Vagina (tissue), 2 donors: ENCODE measurements at regions of chr6 and their contacts with region 1.

Region 1: DNA sequence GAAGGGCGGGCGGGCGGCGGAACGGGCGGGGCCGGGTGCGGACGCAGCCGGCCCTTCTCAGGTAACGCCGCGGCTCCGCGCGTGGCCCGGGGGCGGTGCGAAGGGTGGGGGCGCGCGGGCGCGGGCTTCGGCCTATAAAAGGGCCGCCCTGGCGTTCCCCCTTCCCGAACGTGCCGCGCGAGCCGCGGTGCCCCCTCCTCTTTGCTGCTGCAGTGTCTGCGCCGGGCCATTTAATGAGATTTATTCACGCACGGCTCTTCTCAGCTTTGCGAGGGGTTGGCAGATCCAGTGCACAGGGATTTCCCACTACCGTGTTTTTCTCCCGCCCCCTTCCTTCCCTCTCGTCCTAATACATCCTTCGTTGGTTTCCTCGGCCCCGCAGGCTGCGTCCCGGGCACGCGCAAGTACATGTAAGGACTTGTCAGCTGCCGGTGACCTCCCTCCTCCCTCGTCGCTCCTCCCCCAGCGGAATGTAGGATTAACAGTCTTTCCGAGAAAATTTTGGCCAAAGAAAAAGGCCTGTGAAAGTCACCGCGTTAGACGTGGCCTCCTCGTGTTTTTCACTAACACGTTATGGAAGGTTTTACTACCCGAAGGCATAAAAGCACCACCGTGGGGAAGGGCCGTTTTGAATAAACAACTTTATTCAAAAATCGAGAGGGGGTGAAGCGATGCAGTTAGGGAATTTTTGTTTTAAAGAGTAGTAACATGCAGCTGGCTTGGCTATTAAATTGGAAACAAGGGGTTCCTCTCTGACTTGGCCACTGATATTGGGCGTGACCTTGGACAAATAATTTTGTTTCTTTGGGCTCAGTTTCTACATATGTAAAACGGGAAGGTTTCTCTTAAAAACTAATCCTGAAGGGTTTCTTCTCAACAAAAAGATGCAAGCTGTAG is 966 bp upstream of the REV3L start:
- DNase-seq: peak in 1 of 2 donors; percentile 99
- H3K4me3 ChIP-seq: peak overlapping the region; percentile 84 to 89
- H3K27ac ChIP-seq: peak overlapping the region; percentile 99
- H3K4me1 ChIP-seq: peaks cover 26% of the 10 kb centered on the region
- H3K27me3 ChIP-seq: no peaks in the 10 kb centered on the region
- CTCF ChIP-seq: peak in 1 of 3 experiments; percentile 17
- POLR2A ChIP-seq: peak in 1 of 2 donors; percentile 76

Region 2: DNA sequence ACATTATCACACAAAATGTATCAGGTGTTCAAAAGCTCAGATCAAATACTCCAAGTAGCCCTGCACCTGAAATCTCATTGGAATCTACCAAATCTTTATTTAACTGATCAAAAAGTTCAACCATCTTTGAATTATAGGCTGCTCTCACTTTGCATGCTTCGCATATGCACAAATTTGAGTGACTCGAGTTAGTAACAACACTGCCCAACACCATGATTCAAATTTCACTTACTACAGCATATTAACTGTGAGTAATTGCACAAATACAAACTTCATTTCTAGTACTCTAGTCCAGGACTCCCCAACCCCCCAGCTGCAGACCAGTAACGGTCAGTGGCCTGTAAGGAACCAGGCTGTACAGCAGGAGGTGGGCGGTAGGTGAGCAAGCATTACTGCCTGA is 1355.6 kb before region 1 on chr6:
- intact Hi-C with region 1: no loop called
- DNase-seq: no peak
- H3K4me3 ChIP-seq: no peak overlapping the region
- H3K27ac ChIP-seq: no peak overlapping the region
- H3K4me1 ChIP-seq: no peaks in the 10 kb centered on the region
- H3K27me3 ChIP-seq: no peaks in the 10 kb centered on the region
- CTCF ChIP-seq: no peak
- POLR2A ChIP-seq: no peak

Region 3: GRCh38 chr6:111353912-111354462 is 130.0 kb before region 1 on chr6:
- intact Hi-C with region 1: no loop called
- DNase-seq: no peak
- H3K4me3 ChIP-seq: no peak overlapping the region
- H3K27ac ChIP-seq: no peak overlapping the region
- H3K4me1 ChIP-seq: no peaks in the 10 kb centered on the region
- H3K27me3 ChIP-seq: no peaks in the 10 kb centered on the region
- CTCF ChIP-seq: no peak
- POLR2A ChIP-seq: no peak

Region 4: GRCh38 chr6:111382476-111383300 is 101.3 kb before region 1 on chr6:
- intact Hi-C with region 1: no loop called
- DNase-seq: no peak
- H3K4me3 ChIP-seq: no peak overlapping the region
- H3K27ac ChIP-seq: no peak overlapping the region
- H3K4me1 ChIP-seq: no peaks in the 10 kb centered on the region
- H3K27me3 ChIP-seq: no peaks in the 10 kb centered on the region
- CTCF ChIP-seq: no peak
- POLR2A ChIP-seq: no peak

Region 5: GRCh38 chr6:111565326-111566221 is 81.6 kb after region 1 on chr6:
- intact Hi-C with region 1: loop called (anchors 10 kb)
- DNase-seq: no peak
- H3K4me3 ChIP-seq: no peak overlapping the region
- H3K27ac ChIP-seq: peak overlapping the region; percentile 81
- H3K4me1 ChIP-seq: peaks cover 68% of the 10 kb centered on the region
- H3K27me3 ChIP-seq: no peaks in the 10 kb centered on the region
- CTCF ChIP-seq: no peak
- POLR2A ChIP-seq: no peak